Vagina (tissue), 2 donors: ENCODE measurements at regions of chr1 and their contacts with region 1.

Region 1: DNA sequence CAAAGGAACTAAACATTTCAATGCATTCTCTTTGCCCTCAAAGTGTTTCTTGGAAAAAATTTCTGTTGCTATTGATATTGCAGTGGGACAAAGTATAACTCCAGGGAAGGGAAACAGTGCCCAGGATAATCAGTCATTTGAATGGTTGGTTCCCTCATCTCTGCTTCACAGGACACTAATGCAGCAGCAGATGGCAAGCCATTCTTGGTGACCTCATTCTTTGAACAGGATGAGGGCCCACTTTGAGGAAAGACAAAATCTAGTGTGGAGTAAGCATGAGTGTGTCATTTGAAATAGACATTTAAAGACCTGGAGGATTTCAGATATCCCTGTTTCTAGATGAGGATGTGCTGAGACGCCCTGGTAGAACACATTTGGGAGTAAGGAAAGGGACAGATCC is 32.3 kb downstream of the CHRM3 start:
- DNase-seq: no peak
- H3K4me3 ChIP-seq: no peak overlapping the region
- H3K27ac ChIP-seq: no peak overlapping the region
- H3K4me1 ChIP-seq: no peaks in the 10 kb centered on the region
- H3K27me3 ChIP-seq: no peaks in the 10 kb centered on the region
- CTCF ChIP-seq: no peak
- POLR2A ChIP-seq: no peak

Region 2: DNA sequence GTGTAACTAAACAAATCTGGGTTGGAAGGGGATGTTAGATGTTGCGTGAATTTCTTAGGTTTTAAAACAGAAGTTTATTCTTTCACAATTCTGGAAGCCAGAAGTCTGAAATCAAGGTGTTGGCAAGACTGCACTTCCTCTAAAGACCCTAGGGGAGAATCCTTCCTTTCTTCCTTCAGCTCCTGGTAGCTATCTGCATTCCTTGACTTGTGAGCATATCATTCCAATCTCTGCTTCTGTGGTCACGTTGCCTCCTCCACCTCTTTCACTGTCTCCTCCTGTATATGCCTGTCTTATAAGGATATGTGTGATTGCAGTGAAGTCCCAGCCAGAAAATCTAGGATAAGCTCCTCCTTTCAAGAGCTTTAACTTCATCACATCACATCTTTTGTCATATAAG is 24.6 kb before region 1 on chr1:
- intact Hi-C with region 1: loop called (anchors 1 kb)
- DNase-seq: no peak
- H3K4me3 ChIP-seq: no peak overlapping the region
- H3K27ac ChIP-seq: no peak overlapping the region
- H3K4me1 ChIP-seq: no peaks in the 10 kb centered on the region
- H3K27me3 ChIP-seq: no peaks in the 10 kb centered on the region
- CTCF ChIP-seq: no peak
- POLR2A ChIP-seq: no peak